ENCODE measurements at regions of chr17 and their contacts with region 1.

Region 1: DNA sequence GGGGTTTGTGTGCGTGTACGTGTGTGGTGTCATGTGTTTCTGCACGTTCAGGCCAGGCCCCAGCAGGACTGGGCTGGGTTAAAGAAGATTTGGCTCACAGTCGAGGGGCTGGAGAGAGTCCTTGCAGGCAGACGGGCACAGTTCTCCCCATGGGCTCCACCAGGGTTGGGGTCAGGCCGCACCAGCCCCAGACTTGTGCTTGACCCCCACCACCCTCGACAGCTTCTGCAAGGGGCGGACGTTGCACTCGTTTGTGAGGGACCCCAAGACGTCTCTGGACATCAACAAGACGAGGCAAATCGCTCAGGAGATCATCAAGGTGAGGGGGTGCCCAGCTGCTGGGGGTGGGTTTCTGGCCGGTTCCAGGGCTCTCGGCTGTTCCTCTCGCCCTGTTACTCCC is 23.3 kb upstream of the LGALS9 start:
- DNase-seq: no peak
- H3K4me3 ChIP-seq: no peak overlapping the region
- H3K27ac ChIP-seq: no peak overlapping the region
- H3K4me1 ChIP-seq: no peaks in the 10 kb centered on the region
- H3K27me3 ChIP-seq: no peaks in the 10 kb centered on the region
- CTCF ChIP-seq: no peak
- POLR2A ChIP-seq: no peak

Region 2: DNA sequence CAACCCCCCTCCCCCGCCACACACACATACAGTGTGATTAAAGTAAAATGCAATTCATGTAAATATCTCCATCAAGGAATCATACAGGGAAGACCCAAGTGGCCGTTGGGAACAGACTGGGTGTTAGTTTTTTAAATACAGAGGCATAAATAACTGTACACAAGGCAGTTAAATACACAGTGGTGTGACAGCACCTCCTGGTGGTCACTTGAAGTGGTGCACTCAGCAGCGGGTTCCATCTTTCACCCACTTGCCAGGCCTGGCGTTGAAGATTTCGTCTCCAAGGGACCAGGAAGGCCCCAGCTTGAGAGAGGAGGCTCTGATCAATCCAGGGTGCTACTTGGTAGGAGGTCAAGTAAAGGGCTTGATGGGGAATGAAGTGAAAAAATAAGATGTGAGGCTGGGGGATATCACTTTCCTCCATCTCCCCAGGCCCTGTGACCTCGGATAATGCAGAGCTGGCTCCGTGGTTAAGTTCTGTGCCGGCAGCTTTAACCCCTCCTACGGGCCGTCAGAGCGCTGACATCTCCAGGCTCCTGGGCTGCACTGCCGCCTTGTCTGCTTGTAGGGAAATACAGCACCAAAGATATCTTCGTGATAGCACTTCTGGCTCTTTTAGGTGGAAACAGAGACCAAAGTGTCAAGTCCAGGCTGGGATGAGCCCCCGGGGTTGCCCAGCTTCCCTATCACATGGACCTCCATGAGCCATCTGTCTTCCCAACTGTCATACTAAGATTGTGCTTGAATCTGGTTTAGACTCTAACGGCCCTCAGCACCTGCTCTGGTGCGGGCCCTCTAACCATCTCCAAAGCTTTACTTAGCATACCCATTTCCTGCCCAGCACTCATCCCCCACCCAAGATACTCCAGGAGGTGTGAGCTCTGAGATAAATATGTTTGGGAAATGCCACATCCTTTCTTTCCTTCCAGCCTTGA is 44.0 kb after region 1 on chr17:
- intact Hi-C with region 1: loop called (anchors 2 kb)
- DNase-seq: no peak
- H3K4me3 ChIP-seq: no peak overlapping the region
- H3K27ac ChIP-seq: no peak overlapping the region
- H3K4me1 ChIP-seq: peaks cover 4% of the 10 kb centered on the region
- H3K27me3 ChIP-seq: no peaks in the 10 kb centered on the region
- CTCF ChIP-seq: peak; percentile 91 to 96 (median 94)
- POLR2A ChIP-seq: no peak